ENCODE measurements at regions of chr17 and their contacts with region 1.

Region 1: GRCh38 chr17:44350733-44351226 is 5.7 kb downstream of the GRN start:
- DNase-seq: peak; percentile 81
- ATAC-seq: peak; percentile 79
- H3K4me3 Mint-ChIP-seq: no peak overlapping the region
- H3K27ac Mint-ChIP-seq: no peak overlapping the region
- H3K4me1 Mint-ChIP-seq: peaks cover 25% of the 10 kb centered on the region
- H3K27me3 Mint-ChIP-seq: peaks cover 12% of the 10 kb centered on the region

Region 2: DNA sequence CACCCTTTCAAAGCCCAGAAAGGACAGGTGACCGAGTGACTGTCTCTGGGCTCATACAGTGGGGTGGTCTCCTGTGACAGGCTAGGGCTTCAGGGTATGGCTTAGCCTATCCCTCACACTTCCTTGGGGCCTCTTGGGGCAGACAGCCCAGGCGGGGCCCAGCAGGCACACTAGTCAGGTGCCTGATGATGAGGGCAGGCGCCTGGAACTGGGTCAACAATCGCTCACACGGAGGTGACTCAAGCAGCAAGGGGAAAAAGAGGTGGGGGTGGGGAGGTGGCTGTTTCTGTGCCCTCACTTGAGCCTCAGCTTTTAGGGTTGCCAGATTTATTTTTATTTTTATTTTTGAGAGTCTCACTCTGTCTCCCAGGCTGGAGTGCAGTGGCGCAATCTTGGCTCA is 12.1 kb before region 1 on chr17:
- CTCF ChIA-PET with region 1: interaction called, 40 read pairs
- DNase-seq: no peak
- ATAC-seq: peak; percentile 36
- H3K4me3 Mint-ChIP-seq: no peak overlapping the region
- H3K27ac Mint-ChIP-seq: no peak overlapping the region
- H3K4me1 Mint-ChIP-seq: no peaks in the 10 kb centered on the region
- H3K27me3 Mint-ChIP-seq: peaks cover 17% of the 10 kb centered on the region

Region 3: DNA sequence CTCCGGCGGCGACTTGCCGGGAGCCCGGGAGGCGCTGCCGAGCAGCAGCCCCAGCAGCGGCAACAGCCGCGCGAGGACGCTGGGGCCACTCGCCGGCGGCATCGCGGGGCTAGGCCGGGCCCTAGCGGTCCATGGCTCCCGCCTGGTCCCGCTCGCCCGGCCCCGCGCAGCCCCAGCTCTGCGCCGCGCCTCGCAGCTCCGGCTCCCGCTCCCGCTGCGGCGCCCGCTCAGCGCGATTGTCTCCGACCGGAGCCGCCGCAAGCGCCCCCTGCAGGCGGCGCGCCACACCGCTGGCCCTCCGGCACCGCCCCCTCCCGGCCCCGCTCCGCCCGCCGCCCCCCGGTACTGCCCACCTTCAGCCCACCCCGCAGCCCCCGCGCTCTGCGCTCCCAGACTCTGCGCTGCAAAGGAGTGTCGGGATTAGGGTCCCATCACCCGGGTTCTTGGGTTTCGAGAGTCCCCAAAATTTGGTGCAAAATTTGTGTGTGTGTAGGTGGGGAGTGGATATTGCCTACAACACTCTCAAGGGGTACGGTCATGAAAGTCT is 12.9 kb after region 1 on chr17 and contains the start of gene FAM171A2:
- CTCF ChIA-PET with region 1: interaction called, 45 read pairs
- DNase-seq: peak; percentile 68
- ATAC-seq: peak; percentile 95
- H3K4me3 Mint-ChIP-seq: peak within 1 kb of the TSS; percentile 56
- H3K27ac Mint-ChIP-seq: no peak within 1 kb of the TSS
- H3K4me1 Mint-ChIP-seq: no peaks in the 10 kb centered on the region
- H3K27me3 Mint-ChIP-seq: peaks cover 51% of the 10 kb centered on the region
- total RNA-seq, gene FAM171A2: 0.26 TPM in 1 of 2 experiments, not detected in the other

Region 4: DNA sequence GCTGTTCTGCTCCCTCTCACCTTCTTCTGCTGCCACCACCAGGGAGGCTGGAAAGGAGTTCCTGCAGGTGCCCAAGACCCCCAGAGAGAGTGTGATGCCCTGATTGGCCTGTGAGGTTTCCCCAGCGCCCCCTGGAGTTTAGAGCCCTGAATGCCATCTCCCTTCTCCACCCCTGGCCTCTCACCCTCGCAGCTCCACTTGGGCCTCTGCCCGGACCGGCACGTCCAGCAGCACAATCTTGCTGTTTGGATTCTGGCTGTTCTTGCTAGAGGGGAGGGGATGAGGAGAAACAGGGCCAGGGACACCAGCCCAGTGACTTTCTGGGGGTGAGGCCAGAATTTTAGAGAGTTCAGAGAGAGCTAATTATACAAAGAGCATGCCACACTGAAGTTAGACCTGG is 25.3 kb after region 1 on chr17:
- CTCF ChIA-PET with region 1: no interaction called
- DNase-seq: no peak
- ATAC-seq: peak; percentile 33
- H3K4me3 Mint-ChIP-seq: no peak overlapping the region
- H3K27ac Mint-ChIP-seq: no peak overlapping the region
- H3K4me1 Mint-ChIP-seq: no peaks in the 10 kb centered on the region
- H3K27me3 Mint-ChIP-seq: peaks cover 13% of the 10 kb centered on the region

Measured in activated CD8-positive, alpha-beta memory T cell treated with anti-CD3 and anti-CD28 coated beads, Interleukin-2, amount 10 ng/mL, durations not matched to agents 7 days and 5 days (primary cell).